GM10248 (cell line): ENCODE measurements at regions of chr11 and their contacts with region 1.

Region 1: DNA sequence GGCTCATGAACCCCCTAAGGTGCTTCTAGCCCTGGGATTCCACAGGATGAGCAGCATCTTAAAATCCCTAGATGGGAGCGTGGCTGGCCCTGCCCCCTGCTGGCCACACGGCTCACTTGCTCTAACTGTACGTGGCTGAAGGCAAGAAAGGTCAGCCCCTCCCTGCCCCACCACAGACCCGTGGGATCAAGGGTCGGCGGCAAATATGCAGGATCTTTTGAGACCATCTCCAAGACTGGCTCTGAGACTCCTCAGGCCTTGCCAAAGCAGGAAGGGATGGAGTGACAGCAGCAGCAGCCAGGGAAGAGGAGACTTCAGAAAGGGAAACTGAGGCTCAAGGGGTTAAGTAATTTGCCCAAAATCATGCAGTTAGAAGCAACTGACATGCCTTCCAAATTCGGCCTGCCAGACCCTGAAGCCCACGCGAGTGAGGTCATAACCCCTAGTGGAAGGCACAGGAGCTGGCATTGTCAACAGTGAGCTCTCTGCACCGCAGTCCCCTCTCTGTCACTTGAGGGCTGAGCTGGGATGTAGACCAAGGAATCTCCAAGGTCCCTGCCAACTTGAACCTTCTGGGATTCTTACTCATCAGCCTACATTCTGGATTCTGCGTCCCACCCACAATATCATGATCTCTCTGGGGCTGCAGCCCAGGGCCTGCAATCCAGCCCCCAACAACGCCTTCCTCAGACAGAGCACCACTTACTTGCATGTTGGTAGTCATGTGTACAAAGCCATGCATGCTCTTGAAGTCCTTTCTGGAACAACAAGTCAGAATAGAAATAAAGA is 31.4 kb downstream of the CREB3L1 start:
- DNase-seq: peak; percentile 83
- CTCF ChIP-seq: peak; percentile 89

Region 2: DNA sequence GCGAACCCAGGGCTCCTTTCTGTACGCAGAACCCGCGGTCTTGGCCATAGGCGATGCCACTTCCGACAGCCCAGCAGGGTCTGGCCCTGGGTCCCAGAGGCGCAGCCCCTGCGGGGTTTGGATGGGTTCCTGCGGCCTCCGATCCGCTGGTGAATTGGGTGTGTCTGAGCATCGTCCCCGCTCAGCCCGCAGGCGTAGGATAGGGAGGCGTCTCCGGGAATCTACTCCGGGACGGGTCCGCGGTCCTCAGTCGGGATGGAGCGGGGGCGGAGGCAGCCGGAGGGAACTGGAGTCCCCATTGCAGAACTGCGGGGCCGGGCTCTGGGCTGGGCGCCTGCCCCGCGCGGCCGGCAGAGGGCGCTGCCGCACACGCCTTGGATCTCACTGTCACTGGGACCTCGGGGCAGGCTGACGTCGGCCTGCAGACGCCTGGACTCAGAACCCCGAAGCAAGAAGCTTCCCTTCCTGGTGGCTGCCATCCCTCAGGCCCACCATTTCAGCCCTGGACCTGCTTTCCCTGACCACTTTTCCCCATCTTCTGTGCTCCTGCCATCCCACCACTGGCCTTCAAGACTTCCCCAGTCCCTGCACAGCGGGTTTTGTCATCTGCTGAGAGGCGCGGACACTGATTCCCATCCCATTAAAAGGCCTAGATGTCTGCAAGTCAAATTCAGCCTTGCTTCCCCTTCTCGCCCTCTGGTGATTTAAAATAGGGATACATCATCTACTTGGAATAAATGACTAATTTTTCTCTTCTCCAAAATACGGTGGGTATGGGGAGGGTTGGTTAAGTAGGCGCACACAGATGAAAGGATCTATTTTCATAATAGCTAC is 69.6 kb before region 1 on chr11:
- CTCF ChIA-PET with region 1: interaction called, 480 read pairs
- POLR2A ChIA-PET with region 1: no interaction called
- DNase-seq: peak; percentile 90
- CTCF ChIP-seq: peak; percentile 99

Region 3: GRCh38 chr11:46272816-46273427 is 35.9 kb before region 1 on chr11:
- CTCF ChIA-PET with region 1: interaction called, 13 read pairs
- POLR2A ChIA-PET with region 1: no interaction called
- DNase-seq: no peak
- CTCF ChIP-seq: no peak

Region 4: DNA sequence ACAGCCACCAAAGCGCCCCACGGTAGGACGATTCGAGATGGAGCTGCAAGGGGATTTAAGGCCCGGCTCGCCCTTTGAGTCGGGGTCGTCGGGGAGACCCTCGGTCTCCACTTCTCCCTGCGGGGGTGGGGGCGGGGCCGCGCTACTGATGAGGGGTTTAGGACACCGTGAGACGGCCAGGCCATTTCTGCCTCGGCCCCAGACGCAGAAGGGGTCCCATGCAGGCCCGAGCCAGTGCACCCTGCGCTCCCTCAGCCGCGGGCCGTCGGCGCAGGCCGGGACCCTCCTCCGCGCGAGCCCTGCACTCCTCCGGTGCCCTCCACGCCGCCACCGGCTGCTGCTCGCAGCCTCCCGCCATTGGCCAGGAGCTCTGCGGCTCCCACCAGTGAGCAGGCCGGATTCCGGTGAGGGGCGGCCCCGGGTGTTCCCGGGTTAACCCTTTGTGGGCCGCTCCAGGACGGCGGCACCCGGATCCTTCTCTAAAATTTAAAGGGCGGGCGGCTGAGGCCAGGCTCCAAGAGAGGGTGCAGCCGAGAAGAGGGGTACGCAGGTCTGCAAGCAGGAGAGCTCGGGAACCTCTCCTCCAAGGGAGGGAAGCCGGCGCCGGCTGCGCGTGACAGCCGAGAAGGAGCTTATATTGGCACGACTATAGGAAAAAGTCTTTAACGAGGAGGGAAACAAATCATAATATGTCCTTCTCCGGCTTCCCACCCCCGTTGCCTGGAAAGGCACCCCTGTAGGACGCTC is 13.3 kb before region 1 on chr11:
- CTCF ChIA-PET with region 1: interaction called, 127 read pairs
- POLR2A ChIA-PET with region 1: no interaction called
- DNase-seq: peak; percentile 82
- CTCF ChIP-seq: no peak

Region 5: GRCh38 chr11:46332568-46333393 is 24.0 kb after region 1 on chr11:
- CTCF ChIA-PET with region 1: interaction called, 23 read pairs
- POLR2A ChIA-PET with region 1: no interaction called
- DNase-seq: no peak
- CTCF ChIP-seq: no peak